PC-9 (cell line): ENCODE measurements at regions of chr7 and their contacts with region 1.

Region 1: DNA sequence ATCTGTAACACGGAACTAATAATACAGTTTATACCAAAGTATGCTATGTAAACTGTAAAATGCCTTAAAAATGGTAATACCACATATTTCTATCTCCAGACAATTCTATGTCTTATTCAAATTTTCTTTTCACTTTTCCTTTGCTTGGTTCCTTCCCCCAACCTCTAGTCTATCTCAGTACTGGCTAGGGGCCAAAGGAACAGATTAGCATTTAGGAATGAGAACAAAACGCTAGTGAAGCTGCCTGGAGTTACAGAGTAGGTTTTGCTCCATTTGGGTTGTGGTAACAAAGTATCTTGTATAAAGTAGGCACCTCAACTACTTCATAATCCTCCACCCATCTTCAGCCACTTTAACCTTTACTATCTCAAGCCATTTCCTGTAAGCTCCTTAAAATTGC is 94.1 kb downstream of the HBP1 start:
- DNase-seq: no peak
- H3K4me3 ChIP-seq: no peak overlapping the region
- H3K27ac ChIP-seq: no peak overlapping the region
- H3K4me1 ChIP-seq: no peaks in the 10 kb centered on the region
- H3K27me3 ChIP-seq: no peaks in the 10 kb centered on the region
- CTCF ChIP-seq: no peak

Region 2: GRCh38 chr7:107277331-107277730 is 14.5 kb after region 1 on chr7:
- CTCF ChIA-PET with region 1: interaction called, 11 read pairs
- POLR2A ChIA-PET with region 1: no interaction called
- intact Hi-C with region 1: no loop called
- DNase-seq: no peak
- H3K4me3 ChIP-seq: no peak overlapping the region
- H3K27ac ChIP-seq: no peak overlapping the region
- H3K4me1 ChIP-seq: no peaks in the 10 kb centered on the region
- H3K27me3 ChIP-seq: no peaks in the 10 kb centered on the region
- CTCF ChIP-seq: no peak

Region 3: DNA sequence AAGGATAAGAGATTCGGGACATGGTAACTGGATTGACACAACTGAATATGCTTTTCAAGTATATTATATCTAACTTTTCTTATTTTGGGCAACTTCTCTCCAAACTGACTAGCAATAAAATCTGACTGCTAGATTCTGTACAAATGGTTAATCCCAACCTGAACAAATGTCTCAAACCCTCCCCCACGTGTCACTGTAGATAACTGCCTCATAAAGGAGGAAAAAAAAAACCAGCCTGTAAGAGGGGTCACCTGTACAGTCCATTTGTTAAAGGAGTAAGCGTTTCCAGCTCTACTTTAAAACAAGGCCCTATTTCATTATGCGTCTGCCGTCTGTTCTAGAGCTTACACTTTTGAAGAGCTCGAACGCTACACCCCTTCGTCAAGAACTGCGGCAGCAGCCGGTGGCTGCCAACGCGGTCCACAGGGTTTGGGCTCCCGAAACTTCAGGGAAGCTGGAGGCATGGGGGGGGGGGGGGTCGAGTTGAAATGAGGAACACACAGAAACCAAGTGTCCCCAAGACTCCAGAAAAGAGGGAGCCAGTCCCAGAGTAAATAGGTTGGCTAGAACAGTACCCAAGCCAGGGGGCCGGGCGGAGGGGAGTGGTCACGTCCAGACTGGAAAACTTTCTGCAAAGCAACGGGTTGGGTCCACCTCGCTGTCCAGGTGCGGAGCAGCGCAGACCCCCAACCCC is 300.4 kb after region 1 on chr7:
- CTCF ChIA-PET with region 1: no interaction called
- POLR2A ChIA-PET with region 1: no interaction called
- intact Hi-C with region 1: no loop called
- DNase-seq: peak in 1 of 2 experiments; percentile 49
- H3K4me3 ChIP-seq: peak overlapping the region; percentile 92
- H3K27ac ChIP-seq: peak overlapping the region; percentile 89
- H3K4me1 ChIP-seq: peaks cover 41% of the 10 kb centered on the region
- H3K27me3 ChIP-seq: no peaks in the 10 kb centered on the region
- CTCF ChIP-seq: no peak